Gastrocnemius medialis (tissue), 4 donors: ENCODE measurements at regions of chr2 and their contacts with region 1.

Region 1: DNA sequence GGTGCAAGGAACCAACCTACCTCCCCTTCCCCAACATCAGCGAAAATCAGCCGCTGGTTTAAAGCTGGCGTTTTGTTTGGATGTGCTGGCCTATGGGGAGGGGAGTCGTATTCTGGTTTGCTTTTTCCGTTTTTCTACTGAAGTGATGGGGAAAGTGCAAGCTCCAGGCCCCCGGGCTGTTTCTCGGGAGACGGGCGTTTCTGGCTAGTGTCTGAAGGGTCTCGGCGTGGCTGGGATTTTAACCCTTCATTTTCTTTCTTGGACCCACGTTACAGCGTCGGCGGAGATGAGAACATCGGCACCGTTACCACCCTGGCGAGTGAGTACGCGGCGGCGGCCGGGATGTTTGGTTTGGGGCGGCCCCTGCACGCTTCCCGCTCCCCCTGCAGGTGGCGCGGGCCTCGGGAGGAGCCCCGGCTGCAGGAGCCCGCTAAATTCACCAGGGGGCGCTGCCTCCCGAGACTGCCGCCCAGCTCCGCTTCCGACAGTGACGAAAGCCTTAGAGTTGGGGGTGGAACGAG is 70.7 kb downstream of the PLB1 start:
- DNase-seq: peak; percentile 67 to 78
- ATAC-seq: peak; percentile 81 to 90
- H3K4me3 ChIP-seq: peak overlapping the region; percentile 56 to 78 (median 67)
- H3K27ac ChIP-seq: peak overlapping the region; percentile 80 to 89 (median 85)
- H3K4me1 ChIP-seq: peaks cover 16 to 19% of the 10 kb centered on the region in 2 donors
- H3K27me3 ChIP-seq: no peaks in the 10 kb centered on the region
- CTCF ChIP-seq: peak in 4 of 5 experiments; percentile 100
- POLR2A ChIP-seq: no peak

Region 2: DNA sequence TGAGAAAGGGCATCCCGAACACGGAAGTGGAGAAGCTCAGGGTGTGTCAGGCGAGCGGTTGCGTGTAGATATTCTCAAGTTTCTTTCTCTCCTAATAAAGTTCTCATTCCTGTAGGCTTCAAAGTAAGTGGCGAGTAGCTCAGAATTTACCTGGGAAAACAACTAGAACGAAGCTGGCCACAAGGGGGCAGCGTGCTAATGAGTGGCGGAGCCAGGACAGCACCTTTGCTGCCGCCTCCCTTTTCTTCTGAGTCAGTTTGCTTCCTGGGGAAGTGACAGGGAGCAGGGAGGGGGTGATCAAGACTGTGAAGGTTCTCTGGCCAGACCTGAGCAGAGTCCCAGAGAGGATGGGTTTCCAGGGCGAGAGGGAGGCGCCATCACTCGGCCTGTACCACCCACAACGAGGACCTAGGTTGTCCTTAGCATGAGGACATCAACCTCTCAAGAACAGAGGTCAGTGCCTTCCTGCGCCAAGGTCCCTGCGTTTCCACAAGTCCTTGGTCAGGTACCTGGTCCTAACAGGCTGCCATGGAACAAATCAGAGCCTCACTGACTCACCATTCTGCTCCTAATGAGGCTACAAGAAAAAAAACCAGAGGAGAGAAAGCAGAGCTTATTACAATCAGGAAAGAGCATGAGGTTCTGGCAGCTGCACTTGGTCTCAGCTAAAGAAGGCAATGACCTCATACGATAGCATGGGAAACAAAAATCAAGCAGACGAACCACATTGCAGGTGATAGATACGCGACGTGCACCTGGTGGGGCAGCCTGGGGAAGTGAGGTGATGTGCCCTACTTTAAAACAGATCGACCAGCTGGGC is 27.9 kb after region 1 on chr2:
- in situ Hi-C with region 1: no loop called
- intact Hi-C with region 1: loop called (anchors 2 kb)
- DNase-seq: peak; percentile 87 to 93
- ATAC-seq: peak; percentile 90 to 93
- H3K4me3 ChIP-seq: peak overlapping the region; percentile 7 to 35 (median 19)
- H3K27ac ChIP-seq: peak overlapping the region; percentile 89 to 97 (median 92)
- H3K4me1 ChIP-seq: peaks cover 28 to 39% of the 10 kb centered on the region in 2 donors
- H3K27me3 ChIP-seq: no peaks in the 10 kb centered on the region
- CTCF ChIP-seq: peak; percentile 86 to 95 (median 90)
- POLR2A ChIP-seq: peak; percentile 42 to 65

Region 3: GRCh38 chr2:28606986-28607441 is 40.4 kb after region 1 on chr2:
- in situ Hi-C with region 1: no loop called
- intact Hi-C with region 1: loop called (anchors 1 kb)
- DNase-seq: no peak
- ATAC-seq: peak in 1 of 2 donors; percentile 9
- H3K4me3 ChIP-seq: no peak overlapping the region
- H3K27ac ChIP-seq: peak overlapping the region; percentile 83 to 93 (median 89)
- H3K4me1 ChIP-seq: peaks cover 39 to 47% of the 10 kb centered on the region in 2 donors
- H3K27me3 ChIP-seq: no peaks in the 10 kb centered on the region
- CTCF ChIP-seq: peak in 4 of 5 experiments; percentile 20 to 56 (median 44)
- POLR2A ChIP-seq: no peak

Region 4: GRCh38 chr2:28810384-28811285 is 244.1 kb after region 1 on chr2 and contains the start of gene SPDYA:
- in situ Hi-C with region 1: no loop called
- intact Hi-C with region 1: loop called (anchors 5 kb)
- DNase-seq: peak; percentile 44 to 54
- ATAC-seq: peak; percentile 77 to 80
- H3K4me3 ChIP-seq: peak within 1 kb of the TSS; percentile 53 to 70 (median 59)
- H3K27ac ChIP-seq: no peak within 1 kb of the TSS
- H3K4me1 ChIP-seq: peaks cover 5 to 11% of the 10 kb centered on the region in 2 donors
- H3K27me3 ChIP-seq: no peaks in the 10 kb centered on the region
- CTCF ChIP-seq: no peak
- POLR2A ChIP-seq: no peak
- total RNA-seq, gene SPDYA: 0.31 TPM in 1 of 4 donors, not detected in the others